ENCODE measurements at regions of chr12 and their contacts with region 1.

Region 1: DNA sequence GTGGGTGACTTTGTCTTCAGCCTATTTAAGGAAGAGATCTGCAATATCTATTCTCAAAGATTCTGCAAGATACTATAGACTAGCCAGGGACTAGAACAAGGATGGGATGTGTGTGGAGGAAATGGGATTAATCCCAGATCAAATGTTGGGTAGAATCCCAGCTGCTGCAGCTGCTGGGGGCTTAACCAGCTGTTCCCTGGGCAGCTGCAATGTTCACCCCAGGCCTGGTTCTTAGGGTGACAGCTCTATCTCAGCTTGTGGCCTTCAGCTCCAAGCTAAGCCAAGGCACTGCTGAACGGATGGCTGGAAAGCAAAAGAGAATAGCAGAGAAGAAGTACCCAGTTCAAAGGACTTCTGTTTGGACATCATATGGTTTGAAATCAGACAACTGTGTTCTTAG is 10.0 kb upstream of the RHEBL1 start:
- DNase-seq: no peak
- ATAC-seq: no peak
- H3K4me3 ChIP-seq: no peak overlapping the region
- H3K4me3 Mint-ChIP-seq: no peak overlapping the region
- H3K27ac ChIP-seq: no peak overlapping the region
- H3K27ac Mint-ChIP-seq: no peak overlapping the region
- H3K4me1 ChIP-seq: no peaks in the 10 kb centered on the region
- H3K4me1 Mint-ChIP-seq: no peaks in the 10 kb centered on the region
- H3K27me3 ChIP-seq: peaks cover 0 to 5% of the 10 kb centered on the region in 2 experiments
- H3K27me3 Mint-ChIP-seq: peaks cover 0 to 5% of the 10 kb centered on the region in 2 donors

Region 2: DNA sequence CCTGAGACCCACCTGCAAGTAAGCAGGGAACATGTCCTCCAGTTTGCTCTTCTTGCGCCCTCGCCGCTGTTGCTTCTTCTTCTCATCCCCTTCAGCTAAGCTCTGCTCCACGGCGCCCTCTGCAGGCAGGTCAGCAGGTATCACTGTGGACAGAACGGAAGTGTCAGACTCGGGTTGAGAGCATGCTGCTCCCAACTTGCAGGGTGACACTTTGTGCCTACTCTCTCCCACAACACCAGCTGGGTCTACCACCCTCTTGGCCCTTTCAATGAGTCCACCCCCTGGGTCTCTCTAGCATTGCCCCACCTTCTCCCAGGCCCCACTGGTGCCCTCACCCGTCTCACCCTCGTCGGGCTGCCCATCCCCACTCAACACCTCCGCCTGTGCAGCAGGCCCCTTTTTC is 35.9 kb before region 1 on chr12:
- CTCF ChIA-PET with region 1: no interaction called
- POLR2A ChIA-PET with region 1: interaction called in 1 of 2 experiments, 10 read pairs
- DNase-seq: peak; percentile 58 to 89 (median 77)
- ATAC-seq: peak; percentile 77 to 89 (median 84)
- H3K4me3 ChIP-seq: no peak overlapping the region
- H3K4me3 Mint-ChIP-seq: no peak overlapping the region
- H3K27ac ChIP-seq: peak overlapping the region; percentile 7
- H3K27ac Mint-ChIP-seq: peak overlapping the region; percentile 36 to 45
- H3K4me1 ChIP-seq: peaks cover 0 to 9% of the 10 kb centered on the region in 2 experiments
- H3K4me1 Mint-ChIP-seq: peaks cover 4 to 13% (median 8%) of the 10 kb centered on the region in 3 donors
- H3K27me3 ChIP-seq: no peaks in the 10 kb centered on the region
- H3K27me3 Mint-ChIP-seq: no peaks in the 10 kb centered on the region

Region 3: DNA sequence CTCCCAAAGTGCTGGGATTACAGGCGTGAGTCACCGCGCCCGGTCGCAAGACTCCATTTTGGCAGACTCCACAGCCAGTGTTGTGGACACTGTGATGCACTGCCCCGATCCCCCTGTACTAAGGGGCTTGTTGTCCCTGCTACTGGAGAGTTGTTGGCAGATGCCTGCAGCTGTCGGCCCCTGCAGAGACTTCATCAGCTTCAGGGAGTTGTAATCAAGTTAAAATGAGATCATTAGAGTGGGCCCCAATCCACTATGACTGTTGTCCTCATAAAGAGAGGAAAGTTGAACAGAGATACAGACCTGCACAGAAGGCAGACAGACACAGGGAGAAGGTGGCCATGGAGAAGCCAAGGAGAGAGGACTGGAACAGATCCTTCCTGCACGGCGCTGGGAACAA is 132.8 kb after region 1 on chr12:
- CTCF ChIA-PET with region 1: no interaction called
- POLR2A ChIA-PET with region 1: no interaction called
- DNase-seq: no peak
- ATAC-seq: no peak
- H3K4me3 ChIP-seq: no peak overlapping the region
- H3K4me3 Mint-ChIP-seq: no peak overlapping the region
- H3K27ac ChIP-seq: no peak overlapping the region
- H3K27ac Mint-ChIP-seq: no peak overlapping the region
- H3K4me1 ChIP-seq: no peaks in the 10 kb centered on the region
- H3K4me1 Mint-ChIP-seq: no peaks in the 10 kb centered on the region
- H3K27me3 ChIP-seq: peaks cover 0 to 2% of the 10 kb centered on the region in 2 experiments
- H3K27me3 Mint-ChIP-seq: peaks cover 0 to 5% of the 10 kb centered on the region in 2 donors

Measured in T-cell (primary cell).